ENCODE measurements at regions of chr1 and their contacts with region 1.

Region 1: GRCh38 chr1:207205614-207206061 is 101.6 kb downstream of the C4BPA start:
- H3K4me3 Mint-ChIP-seq: no peak overlapping the region
- H3K27ac Mint-ChIP-seq: peak overlapping the region; percentile 79
- H3K4me1 Mint-ChIP-seq: peaks cover 26% of the 10 kb centered on the region
- H3K27me3 Mint-ChIP-seq: peaks cover 17% of the 10 kb centered on the region

Region 2: DNA sequence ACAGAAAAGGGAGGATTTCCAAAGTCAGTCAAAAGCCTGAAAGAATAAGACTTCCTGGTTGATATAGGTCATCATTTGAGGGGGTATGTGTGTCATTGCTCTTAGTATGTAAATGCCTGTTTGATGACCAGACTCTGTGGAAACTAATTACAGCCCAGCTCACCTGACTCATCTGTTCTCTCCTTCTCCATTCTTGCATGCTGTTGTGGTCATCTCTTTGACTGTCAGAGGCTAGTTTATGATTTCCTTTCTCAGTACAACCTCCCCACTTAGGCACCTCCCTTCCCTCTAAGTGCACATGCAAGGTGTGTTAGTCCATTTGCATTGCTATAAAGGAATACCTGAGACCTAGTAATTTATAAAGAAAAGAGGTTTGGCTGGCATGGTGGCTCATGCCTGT is 170.6 kb before region 1 on chr1:
- intact Hi-C with region 1: no loop called
- H3K4me3 Mint-ChIP-seq: no peak overlapping the region
- H3K27ac Mint-ChIP-seq: no peak overlapping the region
- H3K4me1 Mint-ChIP-seq: peaks cover 5% of the 10 kb centered on the region
- H3K27me3 Mint-ChIP-seq: peaks cover 19% of the 10 kb centered on the region

Region 3: GRCh38 chr1:207155028-207155427 is 50.6 kb before region 1 on chr1:
- intact Hi-C with region 1: loop called (anchors 5 kb)
- H3K4me3 Mint-ChIP-seq: no peak overlapping the region
- H3K27ac Mint-ChIP-seq: peak overlapping the region; percentile 31
- H3K4me1 Mint-ChIP-seq: peaks cover 39% of the 10 kb centered on the region
- H3K27me3 Mint-ChIP-seq: no peaks in the 10 kb centered on the region

Region 4: GRCh38 chr1:207172885-207173284 is 32.8 kb before region 1 on chr1:
- intact Hi-C with region 1: loop called (anchors 5 kb)
- H3K4me3 Mint-ChIP-seq: no peak overlapping the region
- H3K27ac Mint-ChIP-seq: peak overlapping the region; percentile 58
- H3K4me1 Mint-ChIP-seq: peaks cover 17% of the 10 kb centered on the region
- H3K27me3 Mint-ChIP-seq: no peaks in the 10 kb centered on the region

Region 5: DNA sequence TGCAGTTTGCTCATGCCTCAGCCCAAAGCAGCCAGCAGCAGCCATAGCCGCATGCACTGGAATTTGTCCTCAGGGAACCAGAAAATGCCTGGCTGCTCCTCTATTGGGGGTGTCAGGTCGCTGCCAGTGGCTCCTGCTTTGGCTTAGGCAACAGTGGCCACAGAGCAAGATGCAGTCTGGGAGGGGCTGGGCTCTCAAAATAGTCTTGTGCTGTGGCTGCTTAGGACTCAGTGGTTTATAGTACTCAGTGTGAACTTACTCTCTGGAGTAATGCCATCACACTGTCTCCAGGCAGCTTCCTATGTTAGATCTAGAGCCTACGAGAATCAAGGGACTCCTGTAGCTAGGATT is 140.9 kb after region 1 on chr1:
- intact Hi-C with region 1: no loop called
- H3K4me3 Mint-ChIP-seq: no peak overlapping the region
- H3K27ac Mint-ChIP-seq: no peak overlapping the region
- H3K4me1 Mint-ChIP-seq: peaks cover 20% of the 10 kb centered on the region
- H3K27me3 Mint-ChIP-seq: no peaks in the 10 kb centered on the region

Region 6: DNA sequence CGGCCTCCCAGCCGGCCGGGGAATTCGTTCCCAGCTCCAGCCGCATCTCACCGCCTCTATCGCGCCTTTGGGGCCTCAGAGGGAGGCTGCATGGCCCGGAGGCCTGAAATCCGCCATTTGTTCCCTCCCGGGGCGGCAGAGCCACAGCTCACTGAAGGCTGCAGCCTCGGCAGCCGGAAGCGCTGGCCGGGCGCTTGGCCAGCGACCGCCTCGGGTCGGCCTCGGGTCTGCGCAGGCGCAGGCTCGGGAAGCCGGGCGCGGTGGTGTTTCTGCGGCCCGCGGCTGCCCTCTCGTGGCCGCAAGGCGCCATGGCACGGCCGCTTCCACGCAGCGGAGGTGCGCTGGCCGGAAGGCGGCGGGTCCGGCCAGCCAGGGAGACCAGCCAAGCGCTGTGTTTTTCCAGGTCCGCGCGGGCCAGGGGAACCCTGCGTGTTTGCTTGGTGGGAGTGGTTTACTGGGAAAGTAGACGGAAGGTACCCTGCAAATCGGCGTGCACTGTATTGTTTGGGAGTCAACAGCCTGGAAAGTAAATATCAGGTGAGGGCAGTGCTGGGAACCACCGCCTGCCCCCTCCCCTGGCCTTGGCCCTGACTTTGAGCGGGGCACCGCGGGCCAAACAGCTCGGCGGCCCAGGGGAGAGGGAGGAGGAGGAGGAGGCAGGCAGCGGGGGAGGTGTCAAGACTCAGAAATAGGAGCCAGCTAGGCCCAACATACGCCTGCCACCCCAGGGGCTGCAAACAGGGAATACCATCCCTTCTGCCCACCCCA is 758.0 kb after region 1 on chr1:
- intact Hi-C with region 1: no loop called
- H3K4me3 Mint-ChIP-seq: peak overlapping the region; percentile 77
- H3K27ac Mint-ChIP-seq: peak overlapping the region; percentile 93
- H3K4me1 Mint-ChIP-seq: peaks cover 35% of the 10 kb centered on the region
- H3K27me3 Mint-ChIP-seq: peaks cover 38% of the 10 kb centered on the region